ENCODE measurements at regions of chr1 and their contacts with region 1.

Region 1: GRCh38 chr1:85580872-85581801 is 576 bp downstream of the CCN1 start:
- DNase-seq: peak; percentile 85
- ATAC-seq: peak; percentile 31
- H3K4me3 Mint-ChIP-seq: peak overlapping the region; percentile 96
- H3K27ac Mint-ChIP-seq: peak overlapping the region; percentile 100
- H3K4me1 Mint-ChIP-seq: peaks cover 71% of the 10 kb centered on the region
- H3K27me3 Mint-ChIP-seq: peaks cover 33% of the 10 kb centered on the region
- CTCF ChIP-seq: peak; percentile 54

Region 2: GRCh38 chr1:85344256-85344694 is 236.9 kb before region 1 on chr1:
- CTCF ChIA-PET with region 1: interaction called, 11 read pairs
- POLR2A ChIA-PET with region 1: interaction called, 13 read pairs
- DNase-seq: peak; percentile 71
- ATAC-seq: peak; percentile 99
- H3K4me3 Mint-ChIP-seq: no peak overlapping the region
- H3K27ac Mint-ChIP-seq: peak overlapping the region; percentile 92
- H3K4me1 Mint-ChIP-seq: peaks cover 58% of the 10 kb centered on the region
- H3K27me3 Mint-ChIP-seq: no peaks in the 10 kb centered on the region
- CTCF ChIP-seq: 0 out of 2 replicates have a peak, but pooled peaks have one; percentile 27

Region 3: GRCh38 chr1:85554630-85555327 is 26.4 kb before region 1 on chr1:
- CTCF ChIA-PET with region 1: no interaction called
- POLR2A ChIA-PET with region 1: no interaction called
- DNase-seq: no peak
- ATAC-seq: peak; percentile 41; the same call in 1 of the 2 replicates
- H3K4me3 Mint-ChIP-seq: no peak overlapping the region
- H3K27ac Mint-ChIP-seq: no peak overlapping the region
- H3K4me1 Mint-ChIP-seq: peaks cover 8% of the 10 kb centered on the region
- H3K27me3 Mint-ChIP-seq: no peaks in the 10 kb centered on the region; the same call in 1 of the 2 replicates
- CTCF ChIP-seq: no peak

Region 4: GRCh38 chr1:85607126-85607912 is 26.2 kb after region 1 on chr1:
- CTCF ChIA-PET with region 1: interaction called, 8 read pairs
- POLR2A ChIA-PET with region 1: interaction called, 67 read pairs
- DNase-seq: peak; percentile 90
- ATAC-seq: peak; percentile 91
- H3K4me3 Mint-ChIP-seq: no peak overlapping the region
- H3K27ac Mint-ChIP-seq: peak overlapping the region; percentile 97
- H3K4me1 Mint-ChIP-seq: peaks cover 41% of the 10 kb centered on the region
- H3K27me3 Mint-ChIP-seq: no peaks in the 10 kb centered on the region
- CTCF ChIP-seq: no peak

Region 5: GRCh38 chr1:85612704-85613361 is 31.7 kb after region 1 on chr1:
- CTCF ChIA-PET with region 1: interaction called, 8 read pairs
- POLR2A ChIA-PET with region 1: interaction called, 67 read pairs
- DNase-seq: no peak
- ATAC-seq: peak; percentile 73
- H3K4me3 Mint-ChIP-seq: no peak overlapping the region
- H3K27ac Mint-ChIP-seq: peak overlapping the region; percentile 17
- H3K4me1 Mint-ChIP-seq: peaks cover 25% of the 10 kb centered on the region
- H3K27me3 Mint-ChIP-seq: no peaks in the 10 kb centered on the region
- CTCF ChIP-seq: no peak

Region 6: DNA sequence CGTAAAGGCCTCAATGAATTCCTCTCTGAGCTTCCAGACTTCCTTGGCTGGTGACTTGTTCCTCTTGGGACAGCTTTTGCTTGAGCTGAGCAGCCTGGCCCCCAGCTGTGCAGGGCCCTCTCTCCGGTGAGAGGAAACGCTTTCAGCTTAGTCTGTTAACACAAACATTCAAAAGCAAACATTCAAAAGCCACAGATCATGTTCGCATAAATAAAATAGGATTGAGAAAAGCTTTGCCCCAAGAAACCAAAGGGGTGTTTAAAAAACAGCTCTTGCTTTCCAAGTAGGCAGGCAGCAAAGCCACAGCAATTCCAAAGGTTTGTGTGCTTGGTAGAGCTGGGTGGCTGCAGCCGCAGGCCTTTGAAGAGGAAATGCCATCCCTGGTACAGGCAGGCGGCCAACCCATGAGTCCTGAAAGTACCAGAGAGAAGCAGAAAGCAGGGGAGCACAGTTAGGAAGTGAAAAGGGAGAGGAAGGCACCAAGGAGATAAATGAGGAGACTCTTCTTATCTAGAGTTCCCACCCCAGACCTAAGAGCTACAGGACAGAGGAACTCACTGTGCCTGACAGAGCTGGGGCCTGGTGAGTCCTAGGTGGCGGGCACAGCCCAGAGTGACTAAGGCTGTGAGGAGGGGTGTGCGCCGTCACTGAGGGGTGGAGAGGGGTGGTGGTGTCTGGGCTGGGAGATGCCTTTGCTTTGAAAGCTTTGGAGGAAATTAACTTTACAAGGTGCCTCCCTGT is 47.8 kb after region 1 on chr1:
- CTCF ChIA-PET with region 1: interaction called, 16 read pairs
- POLR2A ChIA-PET with region 1: interaction called, 18 read pairs
- DNase-seq: peak; percentile 44
- ATAC-seq: peak; percentile 87
- H3K4me3 Mint-ChIP-seq: no peak overlapping the region
- H3K27ac Mint-ChIP-seq: peak overlapping the region; percentile 87
- H3K4me1 Mint-ChIP-seq: peaks cover 18% of the 10 kb centered on the region
- H3K27me3 Mint-ChIP-seq: no peaks in the 10 kb centered on the region
- CTCF ChIP-seq: no peak

Region 7: DNA sequence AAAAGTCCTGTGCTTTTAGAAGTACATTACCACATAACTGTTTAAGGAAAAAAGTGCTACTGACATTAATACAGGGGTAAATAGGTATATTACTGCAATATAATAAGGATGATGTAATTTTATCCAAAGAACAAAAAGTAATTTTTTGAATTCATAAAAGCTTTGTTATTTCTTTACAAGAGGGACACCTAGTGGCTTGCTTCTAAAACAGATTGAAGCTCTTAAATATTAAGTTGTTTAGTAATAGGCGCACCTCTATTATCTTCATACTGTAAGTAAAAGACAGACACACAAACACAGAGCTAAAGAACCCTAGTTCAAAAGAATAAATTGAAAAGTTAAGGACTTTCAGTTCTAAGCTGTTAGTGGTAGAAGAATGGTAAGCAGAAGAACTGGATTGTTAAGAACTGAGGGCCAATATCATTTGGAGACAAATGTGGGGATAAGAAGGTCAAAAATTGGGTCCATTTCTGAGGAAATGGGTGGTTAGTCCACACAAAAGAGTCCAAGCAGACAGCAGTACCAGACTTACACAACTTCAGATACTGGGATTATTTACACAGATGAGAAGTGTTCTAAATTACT is 111.7 kb after region 1 on chr1:
- CTCF ChIA-PET with region 1: interaction called, 14 read pairs
- POLR2A ChIA-PET with region 1: interaction called, 5 read pairs
- DNase-seq: no peak
- ATAC-seq: no peak
- H3K4me3 Mint-ChIP-seq: no peak overlapping the region
- H3K27ac Mint-ChIP-seq: peak overlapping the region; percentile 4
- H3K4me1 Mint-ChIP-seq: no peaks in the 10 kb centered on the region
- H3K27me3 Mint-ChIP-seq: no peaks in the 10 kb centered on the region
- CTCF ChIP-seq: no peak

Region 8: DNA sequence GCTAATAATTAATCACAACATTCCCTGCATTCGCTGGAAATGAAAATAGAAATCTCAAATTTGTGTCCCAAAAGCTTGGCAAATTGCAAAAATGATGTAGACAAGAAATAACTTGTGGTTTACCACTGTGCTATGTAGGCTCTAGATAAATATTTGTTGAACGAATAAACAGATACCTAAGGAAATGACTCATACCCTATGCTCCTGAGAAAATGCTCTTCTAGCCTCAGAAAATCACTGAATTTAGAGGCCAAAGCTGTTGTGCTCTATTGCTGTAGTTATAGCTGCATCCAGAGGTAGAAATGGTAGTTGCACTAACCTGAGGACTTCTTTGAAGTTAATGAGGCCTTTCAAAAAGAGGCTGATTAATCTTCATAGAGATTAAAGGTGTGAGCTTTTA is 269.1 kb after region 1 on chr1:
- CTCF ChIA-PET with region 1: no interaction called
- POLR2A ChIA-PET with region 1: no interaction called
- DNase-seq: no peak
- ATAC-seq: no peak
- H3K4me3 Mint-ChIP-seq: no peak overlapping the region
- H3K27ac Mint-ChIP-seq: no peak overlapping the region
- H3K4me1 Mint-ChIP-seq: no peaks in the 10 kb centered on the region
- H3K27me3 Mint-ChIP-seq: no peaks in the 10 kb centered on the region
- CTCF ChIP-seq: no peak

Measured in WTC11 (cell line).